ENCODE measurements at regions of chr7 and their contacts with region 1.

Region 1: GRCh38 chr7:105013221-105013815 is 687 bp upstream of the KMT2E start:
- DNase-seq: peak; percentile 95
- ATAC-seq: peak; percentile 58
- H3K4me3 Mint-ChIP-seq: peak overlapping the region; percentile 100
- H3K27ac Mint-ChIP-seq: peak overlapping the region; percentile 100
- H3K4me1 Mint-ChIP-seq: peaks cover 14% of the 10 kb centered on the region
- H3K27me3 Mint-ChIP-seq: no peaks in the 10 kb centered on the region
- CTCF ChIP-seq: peak; percentile 38

Region 2: DNA sequence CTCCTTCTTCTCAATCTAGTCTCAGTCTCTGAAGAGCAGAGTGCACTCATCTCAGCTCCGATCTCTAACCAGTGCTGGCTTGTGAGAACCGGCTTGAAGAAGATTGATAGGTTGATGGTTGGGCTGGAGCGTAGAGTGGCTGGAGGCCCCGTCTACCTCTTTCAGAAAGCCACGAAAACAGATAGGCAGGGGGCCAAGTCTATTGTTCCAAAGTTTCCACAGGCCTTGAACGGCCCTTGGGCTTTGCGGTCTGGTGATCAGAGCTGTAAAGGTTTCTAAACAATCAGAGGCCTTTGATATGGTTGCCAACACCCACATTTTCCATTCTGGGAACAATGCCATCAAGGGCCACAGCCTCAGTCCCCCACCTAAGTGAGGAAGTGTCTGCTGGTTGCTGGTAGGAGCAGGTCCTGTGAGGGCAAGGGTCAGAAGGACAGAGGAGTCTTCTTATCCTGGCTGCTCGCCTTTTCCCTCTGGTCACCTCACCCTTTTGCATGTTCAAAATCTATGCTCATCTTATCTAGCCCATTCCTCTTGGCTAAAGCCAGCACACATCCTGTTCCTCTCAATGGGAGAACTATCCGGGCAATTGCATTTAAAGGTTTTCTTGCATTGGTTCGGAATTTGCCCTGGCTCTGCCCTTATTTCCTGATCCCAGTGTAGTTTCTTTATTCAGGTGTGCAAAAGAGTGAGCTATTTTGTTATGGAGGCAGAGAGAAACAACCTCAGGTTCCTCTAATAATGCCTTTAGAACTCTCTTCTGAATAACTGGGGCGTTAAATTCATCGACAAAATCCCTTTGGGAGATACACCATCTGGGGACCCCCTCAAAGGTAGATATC is 69.6 kb before region 1 on chr7:
- CTCF ChIA-PET with region 1: no interaction called
- POLR2A ChIA-PET with region 1: interaction called, 26 read pairs
- intact Hi-C with region 1: loop called (anchors 2 kb)
- DNase-seq: peak; percentile 93
- ATAC-seq: peak; percentile 57
- H3K4me3 Mint-ChIP-seq: peak overlapping the region; percentile 83
- H3K27ac Mint-ChIP-seq: peak overlapping the region; percentile 100
- H3K4me1 Mint-ChIP-seq: peaks cover 64% of the 10 kb centered on the region
- H3K27me3 Mint-ChIP-seq: no peaks in the 10 kb centered on the region
- CTCF ChIP-seq: no peak

Region 3: GRCh38 chr7:105003275-105003674 is 10.0 kb before region 1 on chr7:
- CTCF ChIA-PET with region 1: interaction called, 5 read pairs
- POLR2A ChIA-PET with region 1: interaction called, 44 read pairs
- intact Hi-C with region 1: no loop called
- DNase-seq: peak; percentile 75
- ATAC-seq: peak; percentile 91
- H3K4me3 Mint-ChIP-seq: peak overlapping the region; percentile 61
- H3K27ac Mint-ChIP-seq: peak overlapping the region; percentile 47
- H3K4me1 Mint-ChIP-seq: peaks cover 78% of the 10 kb centered on the region
- H3K27me3 Mint-ChIP-seq: no peaks in the 10 kb centered on the region
- CTCF ChIP-seq: no peak

Region 4: GRCh38 chr7:105024743-105025142 is 11.4 kb after region 1 on chr7:
- CTCF ChIA-PET with region 1: interaction called, 11 read pairs
- POLR2A ChIA-PET with region 1: interaction called, 53 read pairs
- intact Hi-C with region 1: no loop called
- DNase-seq: no peak
- ATAC-seq: peak; percentile 25
- H3K4me3 Mint-ChIP-seq: no peak overlapping the region
- H3K27ac Mint-ChIP-seq: peak overlapping the region; percentile 40
- H3K4me1 Mint-ChIP-seq: peaks cover 85% of the 10 kb centered on the region
- H3K27me3 Mint-ChIP-seq: no peaks in the 10 kb centered on the region
- CTCF ChIP-seq: no peak

Region 5: DNA sequence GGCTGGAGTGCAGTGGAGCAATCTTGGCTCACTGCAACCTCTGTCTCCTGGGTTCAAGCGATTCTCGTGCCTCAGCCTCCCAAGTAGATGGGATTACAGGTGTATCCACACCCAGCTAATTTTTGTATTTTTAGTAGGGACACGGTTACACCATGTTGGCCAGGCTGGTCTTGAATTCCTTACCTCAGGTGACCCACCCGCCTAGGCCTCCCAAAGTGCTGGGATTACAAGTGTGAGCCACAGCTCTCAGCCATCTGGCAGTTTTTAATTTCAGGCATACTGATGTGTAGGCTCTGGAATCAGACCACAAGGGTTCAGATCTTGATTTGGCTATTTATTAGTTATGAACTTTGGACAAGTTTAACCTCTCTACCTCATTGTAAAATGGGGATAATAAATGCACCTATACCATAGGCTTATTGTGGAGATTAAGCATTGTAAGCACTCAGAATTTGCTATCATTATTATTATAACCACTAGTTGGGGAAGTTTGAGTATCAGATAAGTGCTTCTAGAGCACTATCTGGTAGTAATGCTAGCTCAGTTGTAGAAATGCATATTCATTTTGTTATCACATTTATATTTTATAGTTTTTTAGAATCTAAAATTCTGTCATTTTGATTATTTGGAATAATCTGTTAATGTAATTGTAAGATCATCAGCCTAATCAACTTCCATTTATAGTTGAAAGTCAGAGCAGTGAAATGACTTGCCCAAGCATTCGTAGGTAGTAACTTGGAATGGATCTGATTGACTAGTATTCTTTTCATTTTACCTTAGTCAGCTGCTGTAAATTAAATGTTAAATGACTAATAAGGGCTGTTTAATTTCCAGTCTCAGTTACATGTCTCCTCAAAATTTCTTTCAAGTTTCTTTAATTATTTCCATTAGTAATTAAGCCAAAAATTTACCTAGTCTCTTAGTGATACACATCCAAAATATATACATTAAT is 23.2 kb after region 1 on chr7:
- CTCF ChIA-PET with region 1: interaction called, 3 read pairs
- POLR2A ChIA-PET with region 1: interaction called, 11 read pairs
- intact Hi-C with region 1: loop called (anchors 1 kb)
- DNase-seq: no peak
- ATAC-seq: no peak
- H3K4me3 Mint-ChIP-seq: no peak overlapping the region
- H3K27ac Mint-ChIP-seq: peak overlapping the region; percentile 4
- H3K4me1 Mint-ChIP-seq: peaks cover 61% of the 10 kb centered on the region
- H3K27me3 Mint-ChIP-seq: no peaks in the 10 kb centered on the region
- CTCF ChIP-seq: no peak

Measured in activated CD8-positive, alpha-beta T cell treated with anti-CD3 and anti-CD28 coated beads for 36 hours (primary cell).